Heart left ventricle (tissue), 16 donors: ENCODE measurements at regions of chr3 and their contacts with region 1.

Region 1: DNA sequence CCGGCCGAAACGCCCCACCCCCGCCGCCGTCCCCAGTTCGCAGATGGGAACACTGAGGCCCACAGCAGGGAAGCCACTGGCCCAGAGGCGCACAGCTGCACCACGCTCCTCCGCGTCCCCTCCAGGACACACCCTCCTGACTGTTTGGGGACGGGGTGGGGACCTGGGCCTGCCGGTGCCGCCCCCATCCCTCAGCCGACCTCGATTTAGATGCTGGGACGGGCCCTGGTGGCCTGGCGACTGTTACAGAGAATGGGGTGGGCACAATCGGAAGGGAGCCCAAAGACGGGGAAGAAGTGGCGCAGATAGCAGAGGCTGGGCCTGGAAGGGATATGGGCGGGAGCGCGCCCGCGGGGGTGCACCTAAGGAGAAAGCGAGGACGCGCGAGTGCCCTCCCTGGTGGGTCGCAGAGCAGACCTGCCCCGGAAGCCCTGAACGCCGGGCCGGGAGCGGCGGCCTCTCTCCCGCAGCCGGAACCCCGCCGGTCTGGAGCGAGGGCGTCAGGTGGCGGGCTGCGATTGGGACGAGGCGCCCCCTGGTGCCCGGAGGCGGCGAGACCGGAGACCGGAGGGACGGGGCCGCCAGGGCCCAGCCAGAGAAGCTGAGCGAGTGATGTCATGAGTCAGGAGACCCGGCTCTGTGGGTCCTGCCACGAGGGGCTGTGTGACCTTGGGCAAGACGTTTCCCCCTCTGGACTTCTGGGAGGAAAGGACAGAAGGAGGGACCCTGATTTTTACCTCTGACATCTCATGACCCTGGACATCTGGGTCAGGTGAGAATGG is 78.4 kb downstream of the IQSEC1 start:
- DNase-seq: peak; percentile 90 to 94 (median 92)
- ATAC-seq: peak; percentile 60 to 78 (median 76)
- H3K4me3 ChIP-seq: peak overlapping the region; percentile 48 to 94 (median 84)
- H3K27ac ChIP-seq: peak overlapping the region; percentile 68 to 96 (median 94)
- H3K4me1 ChIP-seq: peaks cover 0 to 71% (median 31%) of the 10 kb centered on the region in 12 donors
- H3K27me3 ChIP-seq: no peaks in the 10 kb centered on the region
- CTCF ChIP-seq: peak; percentile 87 to 98 (median 94)
- POLR2A ChIP-seq: peak in 1 of 2 donors; percentile 61

Region 2: GRCh38 chr3:12868039-12869034 is 126.5 kb before region 1 on chr3:
- intact Hi-C with region 1: loop called in 3 of 10 experiments (anchors 1 to 10 kb)
- DNase-seq: peak; percentile 85 to 90 (median 86)
- ATAC-seq: peak; percentile 83 to 96 (median 94)
- H3K4me3 ChIP-seq: peak overlapping the region in 9 of 12 donors; percentile 1 to 47 (median 26)
- H3K27ac ChIP-seq: peak overlapping the region in 1 of 12 donors; percentile 25
- H3K4me1 ChIP-seq: peaks cover 0 to 13% (median 8%) of the 10 kb centered on the region in 12 donors
- H3K27me3 ChIP-seq: peaks cover 0 to 13% (median 0%) of the 10 kb centered on the region in 9 donors
- CTCF ChIP-seq: peak; percentile 80 to 98 (median 92)
- POLR2A ChIP-seq: no peak

Region 3: GRCh38 chr3:12934431-12934830 is 60.4 kb before region 1 on chr3:
- intact Hi-C with region 1: loop called in 3 of 10 experiments (anchors 5 kb)
- DNase-seq: peak; percentile 78 to 92 (median 83)
- ATAC-seq: peak in 3 of 4 donors; percentile 49 to 69 (median 67)
- H3K4me3 ChIP-seq: peak overlapping the region in 1 of 12 donors; percentile 12
- H3K27ac ChIP-seq: peak overlapping the region; percentile 21 to 89 (median 78)
- H3K4me1 ChIP-seq: peaks cover 43 to 99% (median 87%) of the 10 kb centered on the region in 12 donors
- H3K27me3 ChIP-seq: no peaks in the 10 kb centered on the region
- CTCF ChIP-seq: no peak
- POLR2A ChIP-seq: peak in 1 of 2 donors; percentile 28

Region 4: GRCh38 chr3:13083898-13084297 is 89.1 kb after region 1 on chr3:
- intact Hi-C with region 1: loop called in 1 of 10 experiments (anchors 2 kb)
- DNase-seq: no peak
- ATAC-seq: no peak
- H3K4me3 ChIP-seq: no peak overlapping the region
- H3K27ac ChIP-seq: no peak overlapping the region
- H3K4me1 ChIP-seq: peaks cover 0 to 37% (median 28%) of the 10 kb centered on the region in 12 donors
- H3K27me3 ChIP-seq: no peaks in the 10 kb centered on the region
- CTCF ChIP-seq: no peak
- POLR2A ChIP-seq: no peak